Prostate gland (tissue), 2 donors: ENCODE measurements at regions of chrX and their contacts with region 1.

Region 1: GRCh38 chrX:48737213-48737938 is 24.2 kb upstream of the GLOD5 start:
- DNase-seq: peak; percentile 88
- H3K4me3 ChIP-seq: peak overlapping the region; percentile 41 to 47
- H3K27ac ChIP-seq: peak overlapping the region; percentile 84 to 86
- H3K4me1 ChIP-seq: no peaks in the 10 kb centered on the region
- H3K27me3 ChIP-seq: no peaks in the 10 kb centered on the region
- CTCF ChIP-seq: no peak
- POLR2A ChIP-seq: no peak

Region 2: DNA sequence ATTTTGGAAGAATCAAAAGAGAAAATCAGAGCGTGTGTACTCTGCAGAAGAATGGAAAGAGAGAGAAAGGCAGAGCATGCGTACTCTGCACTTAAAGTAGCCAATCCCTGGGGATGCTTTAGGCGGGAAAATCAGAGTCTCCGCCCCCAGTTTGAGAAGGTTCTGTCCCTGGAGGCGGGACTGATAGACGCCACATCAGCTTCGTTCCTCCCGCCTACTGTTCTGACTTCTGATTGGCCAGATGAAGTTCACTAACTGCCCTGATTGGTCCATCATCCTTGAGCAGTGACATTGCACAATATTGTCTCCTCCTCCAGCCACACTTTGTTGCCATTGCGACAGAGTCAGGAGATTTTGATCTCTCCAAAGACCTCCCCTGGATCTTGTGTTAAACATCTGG is 458.4 kb before region 1 on chrX:
- intact Hi-C with region 1: no loop called
- DNase-seq: no peak
- H3K4me3 ChIP-seq: no peak overlapping the region
- H3K27ac ChIP-seq: no peak overlapping the region
- H3K4me1 ChIP-seq: no peaks in the 10 kb centered on the region
- H3K27me3 ChIP-seq: no peaks in the 10 kb centered on the region
- CTCF ChIP-seq: no peak
- POLR2A ChIP-seq: no peak

Region 3: GRCh38 chrX:48696301-48697181 is 40.8 kb before region 1 on chrX and contains the start of gene SUV39H1:
- intact Hi-C with region 1: loop called (anchors 2 kb)
- DNase-seq: peak; percentile 84
- H3K4me3 ChIP-seq: peak within 1 kb of the TSS; percentile 46 to 63
- H3K27ac ChIP-seq: peak within 1 kb of the TSS; percentile 83 to 86
- H3K4me1 ChIP-seq: no peaks in the 10 kb centered on the region
- H3K27me3 ChIP-seq: no peaks in the 10 kb centered on the region
- CTCF ChIP-seq: peak in 1 of 4 experiments; percentile 5
- POLR2A ChIP-seq: peak; percentile 63
- total RNA-seq, gene SUV39H1: 7.4 to 9.1 TPM

Region 4: DNA sequence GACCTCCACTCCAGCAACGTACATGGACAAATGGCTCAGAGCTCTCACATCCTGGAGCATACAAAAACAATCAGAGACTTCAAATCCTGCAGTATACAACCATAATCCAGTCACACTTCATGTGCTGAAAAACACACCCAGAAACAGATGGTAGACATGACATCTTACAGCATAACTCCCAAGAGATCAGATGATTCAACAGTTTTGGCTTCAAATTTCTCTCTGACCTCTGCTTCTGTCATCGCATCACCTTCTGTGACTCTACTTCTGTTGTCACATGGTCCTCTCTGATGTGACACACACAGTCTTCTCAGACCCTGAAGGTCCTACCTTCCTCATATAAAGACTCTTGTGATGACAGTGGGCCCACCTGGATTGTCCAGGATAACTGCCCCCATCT is 22.3 kb before region 1 on chrX:
- intact Hi-C with region 1: no loop called
- DNase-seq: no peak
- H3K4me3 ChIP-seq: no peak overlapping the region
- H3K27ac ChIP-seq: no peak overlapping the region
- H3K4me1 ChIP-seq: no peaks in the 10 kb centered on the region
- H3K27me3 ChIP-seq: no peaks in the 10 kb centered on the region
- CTCF ChIP-seq: no peak
- POLR2A ChIP-seq: no peak

Region 5: DNA sequence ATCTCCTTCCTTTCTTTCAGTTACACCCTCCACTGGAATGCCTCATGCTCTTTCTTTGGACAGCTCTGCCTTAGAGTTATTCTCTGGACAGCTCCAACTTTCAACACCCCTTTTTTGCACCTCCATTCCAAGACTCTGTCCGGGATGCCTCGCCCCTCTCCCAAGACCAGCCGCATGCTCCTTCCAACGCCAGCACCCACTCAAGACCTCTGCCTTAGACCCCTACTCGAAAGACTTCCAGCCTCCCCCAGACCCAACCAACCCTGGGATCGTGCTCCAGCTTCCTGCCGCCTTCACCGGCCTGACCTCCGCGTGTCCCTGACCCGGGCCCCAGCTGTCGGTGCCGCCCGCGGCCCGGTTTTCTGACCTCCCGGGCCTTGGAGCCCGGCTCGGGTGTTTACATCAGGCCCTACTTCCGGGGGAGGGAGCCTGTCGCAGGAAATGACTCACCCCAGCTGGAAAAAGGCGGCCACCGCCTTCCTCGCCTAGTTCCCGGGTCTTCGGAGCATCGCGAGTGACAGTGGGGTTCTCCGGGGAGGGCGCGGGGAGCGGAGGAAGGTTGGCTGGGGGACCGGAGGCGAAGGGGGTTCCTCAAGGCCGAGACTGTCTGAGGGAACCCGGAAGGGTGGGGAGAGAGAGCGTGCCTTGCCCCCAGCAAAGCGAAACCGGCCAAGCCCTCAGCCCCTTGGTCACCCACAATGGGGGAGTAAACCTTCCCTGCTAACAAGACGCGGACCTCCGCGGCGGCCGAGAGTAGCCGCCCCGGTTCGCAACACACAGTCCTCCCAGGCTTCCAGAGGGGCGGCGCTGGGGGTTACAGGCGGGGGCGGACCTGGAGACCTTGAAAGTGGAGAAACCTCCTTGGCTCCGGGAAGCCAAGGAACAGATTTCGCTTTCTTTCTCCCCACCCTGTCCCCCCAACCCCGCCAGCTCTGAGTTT is 342.4 kb after region 1 on chrX and contains the start of gene WDR45:
- intact Hi-C with region 1: no loop called
- DNase-seq: peak; percentile 66
- H3K4me3 ChIP-seq: peak within 1 kb of the TSS; percentile 51 to 54
- H3K27ac ChIP-seq: peak within 1 kb of the TSS; percentile 91 to 94
- H3K4me1 ChIP-seq: no peaks in the 10 kb centered on the region
- H3K27me3 ChIP-seq: no peaks in the 10 kb centered on the region
- CTCF ChIP-seq: no peak
- POLR2A ChIP-seq: peak; percentile 79
- total RNA-seq, gene WDR45: 67.8 to 93.6 TPM

Region 6: GRCh38 chrX:49096419-49096818 is 359.0 kb after region 1 on chrX:
- intact Hi-C with region 1: no loop called
- DNase-seq: no peak
- H3K4me3 ChIP-seq: no peak overlapping the region
- H3K27ac ChIP-seq: no peak overlapping the region
- H3K4me1 ChIP-seq: no peaks in the 10 kb centered on the region
- H3K27me3 ChIP-seq: no peaks in the 10 kb centered on the region
- CTCF ChIP-seq: no peak
- POLR2A ChIP-seq: no peak